Sigmoid colon (tissue), 7 donors: ENCODE measurements at regions of chr14 and their contacts with region 1.

Region 1: GRCh38 chr14:37172024-37172869 is at the start of gene SLC25A21:
- DNase-seq: peak; percentile 87
- H3K4me3 ChIP-seq: peak within 1 kb of the TSS; percentile 56 to 82 (median 66)
- H3K27ac ChIP-seq: peak within 1 kb of the TSS; percentile 89 to 92 (median 90)
- H3K4me1 ChIP-seq: peaks cover 0 to 20% (median 9%) of the 10 kb centered on the region in 4 donors
- H3K27me3 ChIP-seq: no peaks in the 10 kb centered on the region
- CTCF ChIP-seq: no peak
- EP300 ChIP-seq: no peak
- POLR2A ChIP-seq: peak; percentile 26 to 50
- total RNA-seq, gene SLC25A21: 0.55 to 1.5 (median 1.1) TPM

Region 2: GRCh38 chr14:37197421-37198272 is 25.4 kb after region 1 on chr14 and contains the start of gene MIPOL1:
- intact Hi-C with region 1: loop called (anchors 2 kb)
- DNase-seq: peak; percentile 92
- H3K4me3 ChIP-seq: peak within 1 kb of the TSS; percentile 58 to 68 (median 62)
- H3K27ac ChIP-seq: peak within 1 kb of the TSS; percentile 85 to 90 (median 87)
- H3K4me1 ChIP-seq: peaks cover 0 to 12% (median 7%) of the 10 kb centered on the region in 4 donors
- H3K27me3 ChIP-seq: no peaks in the 10 kb centered on the region
- CTCF ChIP-seq: peak in 2 of 4 experiments; percentile 18 to 20
- EP300 ChIP-seq: no peak
- POLR2A ChIP-seq: no peak
- total RNA-seq, gene MIPOL1: 11.7 to 21.6 (median 14.6) TPM